Activated B cell treated with CpG ODN at 0.5 μM for 24 hours (primary cell): ENCODE measurements at regions of chr22 and their contacts with region 1.

Region 1: GRCh38 chr22:40525249-40525884 is 111.2 kb downstream of the MRTFA start:
- DNase-seq: peak; percentile 50
- ATAC-seq: peak; percentile 63
- H3K4me3 Mint-ChIP-seq: no peak overlapping the region
- H3K27ac Mint-ChIP-seq: no peak overlapping the region
- H3K4me1 Mint-ChIP-seq: peaks cover 48% of the 10 kb centered on the region
- H3K27me3 Mint-ChIP-seq: no peaks in the 10 kb centered on the region
- CTCF ChIP-seq: peak; percentile 39

Region 2: GRCh38 chr22:40592352-40593113 is 67.2 kb after region 1 on chr22:
- CTCF ChIA-PET with region 1: interaction called, 20 read pairs
- POLR2A ChIA-PET with region 1: interaction called, 14 read pairs
- intact Hi-C with region 1: loop called (anchors 1 kb)
- DNase-seq: peak; percentile 21
- ATAC-seq: peak; percentile 75
- H3K4me3 Mint-ChIP-seq: peak overlapping the region; percentile 76
- H3K27ac Mint-ChIP-seq: peak overlapping the region; percentile 96
- H3K4me1 Mint-ChIP-seq: peaks cover 65% of the 10 kb centered on the region
- H3K27me3 Mint-ChIP-seq: no peaks in the 10 kb centered on the region
- CTCF ChIP-seq: no peak

Region 3: GRCh38 chr22:40645579-40646197 is 120.3 kb after region 1 on chr22:
- CTCF ChIA-PET with region 1: interaction called, 215 read pairs
- POLR2A ChIA-PET with region 1: interaction called, 14 read pairs
- intact Hi-C with region 1: loop called (anchors 1 kb)
- DNase-seq: no peak
- ATAC-seq: no peak
- H3K4me3 Mint-ChIP-seq: no peak overlapping the region
- H3K27ac Mint-ChIP-seq: no peak overlapping the region
- H3K4me1 Mint-ChIP-seq: peaks cover 14% of the 10 kb centered on the region
- H3K27me3 Mint-ChIP-seq: no peaks in the 10 kb centered on the region
- CTCF ChIP-seq: no peak

Region 4: DNA sequence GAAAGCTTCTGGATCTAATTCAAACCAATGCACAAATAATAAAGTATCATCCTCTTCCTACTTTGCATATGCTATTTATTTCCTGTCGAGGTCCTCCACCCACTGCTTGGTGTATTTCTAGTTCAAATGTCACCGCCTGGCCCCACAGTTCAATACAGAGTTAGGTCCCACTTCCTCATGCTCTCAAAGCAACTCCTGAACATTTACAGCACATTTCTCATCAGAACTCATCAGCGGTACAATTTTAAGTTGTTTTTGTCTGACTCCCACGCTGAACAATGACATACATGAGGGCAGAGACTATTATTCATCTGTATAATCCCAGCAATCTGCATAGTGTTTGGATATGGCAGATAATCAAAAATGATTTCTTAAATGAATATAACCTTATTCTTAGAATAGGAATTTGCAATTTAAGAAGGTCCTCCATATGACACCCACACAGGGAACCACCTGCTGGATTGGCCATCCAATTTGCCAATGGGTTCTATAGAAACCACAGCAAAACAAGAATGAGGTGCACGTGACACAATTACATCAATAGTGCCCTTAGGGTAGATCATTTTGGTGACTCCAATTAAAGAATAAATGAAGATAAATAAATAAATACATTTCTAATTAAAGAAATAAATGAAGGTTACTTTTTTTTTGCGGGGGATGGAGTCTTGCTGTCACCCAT is 239.5 kb after region 1 on chr22:
- CTCF ChIA-PET with region 1: interaction called, 12 read pairs
- POLR2A ChIA-PET with region 1: no interaction called
- intact Hi-C with region 1: loop called (anchors 2 kb)
- DNase-seq: no peak
- ATAC-seq: peak; percentile 89
- H3K4me3 Mint-ChIP-seq: peak overlapping the region; percentile 69
- H3K27ac Mint-ChIP-seq: peak overlapping the region; percentile 95
- H3K4me1 Mint-ChIP-seq: peaks cover 46% of the 10 kb centered on the region
- H3K27me3 Mint-ChIP-seq: no peaks in the 10 kb centered on the region
- CTCF ChIP-seq: no peak

Region 5: DNA sequence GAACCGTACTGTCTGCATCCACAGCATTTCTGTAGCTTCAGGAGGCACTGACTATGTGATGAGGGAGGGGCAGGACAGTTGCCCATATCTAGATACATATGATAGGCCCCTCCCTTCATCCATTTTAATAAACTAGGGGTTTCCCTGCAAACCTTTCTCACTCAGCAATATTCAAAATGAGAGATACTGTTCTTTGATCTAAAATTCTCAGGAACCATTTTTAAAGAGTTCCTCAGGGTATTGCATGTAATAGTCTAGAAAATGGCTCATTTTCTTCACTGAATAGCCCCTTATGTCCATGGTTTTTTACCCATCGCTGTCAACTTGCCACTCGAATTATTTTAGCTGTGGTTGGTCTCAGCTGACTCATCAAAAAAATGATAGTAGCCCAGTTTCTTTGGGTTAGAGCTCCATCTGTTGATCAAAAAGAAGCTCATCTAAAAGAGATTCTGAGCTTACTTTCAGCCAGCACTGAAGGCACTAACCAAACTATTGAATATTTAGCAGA is 373.5 kb after region 1 on chr22:
- CTCF ChIA-PET with region 1: interaction called, 16 read pairs
- POLR2A ChIA-PET with region 1: no interaction called
- intact Hi-C with region 1: loop called (anchors 1 kb)
- DNase-seq: no peak
- ATAC-seq: peak; percentile 71
- H3K4me3 Mint-ChIP-seq: no peak overlapping the region
- H3K27ac Mint-ChIP-seq: peak overlapping the region; percentile 21
- H3K4me1 Mint-ChIP-seq: peaks cover 3% of the 10 kb centered on the region
- H3K27me3 Mint-ChIP-seq: no peaks in the 10 kb centered on the region
- CTCF ChIP-seq: no peak

Region 6: GRCh38 chr22:41099036-41099435 is 573.7 kb after region 1 on chr22:
- CTCF ChIA-PET with region 1: no interaction called
- POLR2A ChIA-PET with region 1: no interaction called
- intact Hi-C with region 1: no loop called
- DNase-seq: no peak
- ATAC-seq: no peak
- H3K4me3 Mint-ChIP-seq: no peak overlapping the region
- H3K27ac Mint-ChIP-seq: no peak overlapping the region
- H3K4me1 Mint-ChIP-seq: peaks cover 84% of the 10 kb centered on the region
- H3K27me3 Mint-ChIP-seq: no peaks in the 10 kb centered on the region
- CTCF ChIP-seq: no peak